Psoas muscle (tissue), 8 donors: ENCODE measurements at regions of chr11 and their contacts with region 1.

Region 1: DNA sequence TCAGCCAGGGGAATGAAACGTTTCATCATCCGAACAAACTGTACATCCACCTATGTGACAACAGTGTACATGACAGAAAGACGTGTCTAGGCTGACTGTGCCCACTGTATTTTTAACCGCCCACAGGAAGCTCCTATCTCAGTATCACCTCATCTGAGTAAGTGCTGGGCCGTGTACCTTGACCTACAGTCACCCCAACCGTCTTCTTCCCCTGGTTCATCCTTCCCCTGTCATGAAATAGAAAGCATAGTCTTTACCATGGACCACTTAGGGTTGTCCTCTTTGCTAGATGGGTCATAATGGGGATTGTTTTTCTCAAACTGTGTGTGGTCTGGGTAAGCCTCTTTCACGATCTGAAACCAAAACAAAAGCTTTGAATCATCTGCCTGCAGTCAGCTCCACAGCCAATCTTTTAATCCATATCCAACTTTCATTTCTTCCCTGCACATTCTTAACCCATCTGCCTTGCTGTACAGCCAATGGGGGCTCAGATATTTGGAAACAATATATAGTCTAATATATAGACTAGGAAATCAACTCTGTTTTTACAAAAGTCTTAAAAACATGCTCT is 4.2 kb downstream of the THYN1 start:
- DNase-seq: no peak
- ATAC-seq: no peak
- H3K4me3 ChIP-seq: no peak overlapping the region
- H3K27ac ChIP-seq: no peak overlapping the region
- H3K4me1 ChIP-seq: peaks cover 8% of the 10 kb centered on the region
- H3K27me3 ChIP-seq: no peaks in the 10 kb centered on the region
- CTCF ChIP-seq: no peak

Region 2: DNA sequence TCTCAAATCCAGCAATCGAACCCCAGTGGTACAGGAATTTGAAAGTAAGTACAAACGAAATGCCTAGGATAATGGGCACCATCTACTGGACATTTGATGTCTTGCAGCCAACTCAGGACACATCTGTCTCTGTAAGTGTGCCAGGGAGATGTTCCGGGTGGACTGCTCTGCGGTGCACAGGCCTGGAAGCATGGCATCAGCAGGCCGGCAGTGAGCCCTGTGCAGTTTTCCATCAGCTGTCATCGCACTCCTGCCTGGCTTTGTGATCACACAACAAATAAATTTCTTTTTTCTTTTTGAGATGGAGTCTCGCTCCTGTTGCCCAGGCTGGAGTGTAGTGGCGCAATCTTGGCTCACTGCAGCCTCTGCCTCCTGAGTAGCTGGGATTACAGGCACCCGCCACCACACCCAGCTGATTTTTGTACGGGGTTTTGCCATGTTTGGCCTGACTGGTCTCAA is 109.1 kb before region 1 on chr11:
- intact Hi-C with region 1: no loop called
- DNase-seq: peak in 1 of 2 donors; percentile 40
- ATAC-seq: peak; percentile 88 to 96 (median 94)
- H3K4me3 ChIP-seq: no peak overlapping the region
- H3K27ac ChIP-seq: no peak overlapping the region
- H3K4me1 ChIP-seq: no peaks in the 10 kb centered on the region
- H3K27me3 ChIP-seq: no peaks in the 10 kb centered on the region
- CTCF ChIP-seq: peak; percentile 90

Region 3: DNA sequence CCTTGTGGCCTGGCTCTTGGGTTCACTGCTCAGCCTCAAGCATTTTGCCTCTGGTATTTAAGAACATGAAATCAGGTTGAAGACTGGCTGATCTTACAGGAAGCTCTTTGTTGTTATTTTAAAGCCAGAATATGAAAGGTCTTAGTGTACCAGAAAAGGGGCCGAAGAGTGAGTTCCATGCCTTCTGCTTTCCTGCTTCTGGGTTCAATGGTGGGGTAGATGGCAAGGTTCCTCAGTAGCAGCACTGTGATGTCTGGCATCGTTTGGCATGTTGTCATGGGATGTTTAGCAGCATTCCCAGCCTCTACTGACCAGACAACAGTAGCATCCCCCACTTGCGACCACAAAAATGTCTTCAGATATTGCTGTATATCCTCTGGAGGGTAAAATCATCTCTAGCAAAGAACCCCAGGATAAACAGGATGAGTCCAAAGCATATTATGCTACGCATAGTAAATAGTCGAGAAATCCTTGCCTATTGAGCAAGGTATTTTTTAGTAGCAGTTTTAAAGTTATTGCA is 22.1 kb before region 1 on chr11:
- intact Hi-C with region 1: loop called in 1 of 2 experiments (anchors 2 kb)
- DNase-seq: no peak
- ATAC-seq: no peak
- H3K4me3 ChIP-seq: peak overlapping the region; percentile 88
- H3K27ac ChIP-seq: no peak overlapping the region
- H3K4me1 ChIP-seq: peaks cover 27% of the 10 kb centered on the region
- H3K27me3 ChIP-seq: no peaks in the 10 kb centered on the region
- CTCF ChIP-seq: no peak